ENCODE measurements at regions of chr2 and their contacts with region 1.

Region 1: GRCh38 chr2:181077128-181077709 is 96.8 kb downstream of the UBE2E3 start:
- DNase-seq: no peak
- H3K4me3 Mint-ChIP-seq: no peak overlapping the region
- H3K27ac Mint-ChIP-seq: no peak overlapping the region
- H3K4me1 Mint-ChIP-seq: peaks cover 7% of the 10 kb centered on the region
- H3K27me3 Mint-ChIP-seq: no peaks in the 10 kb centered on the region

Region 2: DNA sequence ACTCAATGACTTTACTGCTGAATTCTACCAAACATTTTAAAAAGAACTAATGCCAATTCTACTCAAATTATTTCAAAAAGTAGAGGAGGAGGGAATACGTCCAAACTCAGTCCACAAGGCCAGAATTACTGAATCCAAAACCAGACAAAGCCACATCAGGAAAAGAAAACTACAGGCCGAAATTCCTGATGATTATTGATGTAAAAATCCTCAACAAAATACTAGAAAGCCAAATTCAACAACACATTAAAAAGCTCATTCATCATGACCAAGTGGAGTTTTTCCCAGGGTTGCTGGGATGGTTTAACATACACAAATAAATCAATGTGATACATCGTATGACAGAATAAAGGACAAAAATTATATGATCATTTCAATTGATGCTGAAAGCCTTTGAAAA is 200.7 kb before region 1 on chr2:
- CTCF ChIA-PET with region 1: no interaction called
- POLR2A ChIA-PET with region 1: no interaction called
- intact Hi-C with region 1: no loop called
- DNase-seq: no peak
- H3K4me3 Mint-ChIP-seq: no peak overlapping the region
- H3K27ac Mint-ChIP-seq: no peak overlapping the region
- H3K4me1 Mint-ChIP-seq: no peaks in the 10 kb centered on the region
- H3K27me3 Mint-ChIP-seq: peaks cover 10% of the 10 kb centered on the region

Region 3: GRCh38 chr2:180991820-180992219 is 85.4 kb before region 1 on chr2:
- CTCF ChIA-PET with region 1: no interaction called
- POLR2A ChIA-PET with region 1: no interaction called
- intact Hi-C with region 1: no loop called
- DNase-seq: no peak
- H3K4me3 Mint-ChIP-seq: no peak overlapping the region
- H3K27ac Mint-ChIP-seq: no peak overlapping the region
- H3K4me1 Mint-ChIP-seq: peaks cover 24% of the 10 kb centered on the region
- H3K27me3 Mint-ChIP-seq: no peaks in the 10 kb centered on the region

Region 4: DNA sequence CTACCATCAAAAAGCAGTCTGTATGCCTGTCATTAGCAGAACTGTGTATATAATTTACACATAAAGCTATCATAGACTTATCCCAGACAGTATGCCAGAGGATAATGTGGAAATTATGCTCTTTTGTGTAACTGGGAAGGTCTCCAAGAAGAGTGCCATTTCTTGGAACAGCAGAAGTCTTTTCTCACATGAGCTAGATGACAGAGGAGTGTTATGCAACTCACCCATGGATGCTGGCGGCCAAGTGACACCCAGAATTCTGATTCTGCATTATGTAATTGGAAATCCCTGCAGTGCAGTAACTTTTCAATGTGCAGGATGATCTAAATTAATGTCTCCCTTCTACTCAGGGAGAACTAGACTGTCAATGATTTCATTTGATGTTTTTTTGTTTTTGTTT is 63.2 kb after region 1 on chr2:
- CTCF ChIA-PET with region 1: no interaction called
- POLR2A ChIA-PET with region 1: no interaction called
- intact Hi-C with region 1: no loop called
- DNase-seq: no peak
- H3K4me3 Mint-ChIP-seq: peak overlapping the region; percentile 3
- H3K27ac Mint-ChIP-seq: peak overlapping the region; percentile 74
- H3K4me1 Mint-ChIP-seq: peaks cover 63% of the 10 kb centered on the region
- H3K27me3 Mint-ChIP-seq: no peaks in the 10 kb centered on the region

Region 5: DNA sequence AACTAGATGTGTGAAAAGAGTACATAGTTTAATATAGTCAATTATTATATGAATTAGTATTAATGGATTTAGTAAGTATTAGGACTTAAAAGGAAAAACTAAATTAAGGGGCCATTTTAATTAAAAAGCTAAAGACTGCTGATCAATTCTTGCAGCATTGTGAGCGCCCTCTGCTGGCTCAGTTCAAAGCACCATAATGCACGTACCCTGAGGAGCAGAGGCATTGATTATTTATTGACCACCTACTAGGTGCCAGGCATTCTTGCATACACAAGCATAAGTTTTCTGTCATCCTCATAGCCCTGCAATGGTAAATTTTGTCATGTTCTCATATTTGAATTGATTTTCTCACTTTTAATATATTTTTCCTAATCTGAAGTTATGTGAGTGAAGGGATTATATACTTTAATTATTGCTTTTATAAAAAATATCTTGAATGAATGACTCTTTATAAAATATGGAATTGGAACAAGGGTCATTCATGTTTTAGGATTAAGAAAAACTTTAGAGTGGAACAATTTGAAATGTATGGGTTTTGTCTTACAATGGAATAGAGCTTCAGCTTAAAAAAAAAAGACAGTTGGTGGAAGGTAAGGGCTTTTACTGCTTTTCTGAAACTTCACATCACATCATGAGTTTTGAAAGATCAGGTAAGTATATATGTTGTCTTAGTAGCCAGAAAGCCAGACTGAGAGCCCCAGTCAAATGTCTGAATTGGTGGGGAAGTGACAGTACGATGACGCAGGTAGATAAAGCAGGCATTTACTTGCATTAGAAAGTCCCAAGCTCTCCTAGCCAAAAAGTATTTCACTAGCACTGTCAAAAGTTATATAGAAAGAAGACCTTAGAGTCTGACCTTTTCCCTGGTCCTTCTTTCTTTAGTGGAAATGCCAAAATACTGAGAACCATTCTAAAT is 389.7 kb after region 1 on chr2:
- CTCF ChIA-PET with region 1: interaction called, 4 read pairs
- POLR2A ChIA-PET with region 1: no interaction called
- intact Hi-C with region 1: loop called (anchors 2 kb)
- DNase-seq: peak; percentile 83
- H3K4me3 Mint-ChIP-seq: no peak overlapping the region
- H3K27ac Mint-ChIP-seq: peak overlapping the region; percentile 77
- H3K4me1 Mint-ChIP-seq: peaks cover 84% of the 10 kb centered on the region
- H3K27me3 Mint-ChIP-seq: no peaks in the 10 kb centered on the region